CD8-positive, alpha-beta T cell (primary cell): ENCODE measurements at regions of chr15 and their contacts with region 1.

Region 1: GRCh38 chr15:78360426-78360825 is 20.3 kb downstream of the CRABP1 start:
- DNase-seq: no peak
- ATAC-seq: no peak
- H3K4me3 ChIP-seq: no peak overlapping the region
- H3K4me3 Mint-ChIP-seq: no peak overlapping the region
- H3K27ac ChIP-seq: no peak overlapping the region
- H3K27ac Mint-ChIP-seq: no peak overlapping the region
- H3K4me1 ChIP-seq: no peaks in the 10 kb centered on the region
- H3K4me1 Mint-ChIP-seq: no peaks in the 10 kb centered on the region
- H3K27me3 ChIP-seq: peaks cover 0 to 3% of the 10 kb centered on the region in 2 experiments
- H3K27me3 Mint-ChIP-seq: peaks cover 6% of the 10 kb centered on the region
- CTCF ChIP-seq: no peak

Region 2: GRCh38 chr15:78382114-78382880 is 21.9 kb after region 1 on chr15:
- CTCF ChIA-PET with region 1: no interaction called
- POLR2A ChIA-PET with region 1: no interaction called
- intact Hi-C with region 1: loop called in 1 of 2 experiments (anchors 1 kb)
- DNase-seq: no peak
- ATAC-seq: no peak
- H3K4me3 ChIP-seq: no peak overlapping the region
- H3K4me3 Mint-ChIP-seq: no peak overlapping the region
- H3K27ac ChIP-seq: no peak overlapping the region
- H3K27ac Mint-ChIP-seq: no peak overlapping the region
- H3K4me1 ChIP-seq: no peaks in the 10 kb centered on the region
- H3K4me1 Mint-ChIP-seq: no peaks in the 10 kb centered on the region
- H3K27me3 ChIP-seq: no peaks in the 10 kb centered on the region
- H3K27me3 Mint-ChIP-seq: peaks cover 23% of the 10 kb centered on the region
- CTCF ChIP-seq: no peak

Region 3: GRCh38 chr15:78540141-78540928 is 179.9 kb after region 1 on chr15 and contains the start of gene PSMA4:
- CTCF ChIA-PET with region 1: no interaction called
- POLR2A ChIA-PET with region 1: no interaction called
- intact Hi-C with region 1: no loop called
- DNase-seq: peak; percentile 86 to 98 (median 95)
- ATAC-seq: peak; percentile 83
- H3K4me3 ChIP-seq: peak within 1 kb of the TSS; percentile 85 to 96
- H3K4me3 Mint-ChIP-seq: peak within 1 kb of the TSS; percentile 88
- H3K27ac ChIP-seq: peak within 1 kb of the TSS; percentile 89 to 97
- H3K27ac Mint-ChIP-seq: peak within 1 kb of the TSS; percentile 95
- H3K4me1 ChIP-seq: peaks cover 28% of the 10 kb centered on the region
- H3K4me1 Mint-ChIP-seq: peaks cover 31% of the 10 kb centered on the region
- H3K27me3 ChIP-seq: no peaks in the 10 kb centered on the region
- H3K27me3 Mint-ChIP-seq: no peaks in the 10 kb centered on the region
- CTCF ChIP-seq: no peak
- total RNA-seq, gene PSMA4: 72.8 to 79.4 TPM